AG04450 (cell line): ENCODE measurements at regions of chr5 and their contacts with region 1.

Region 1: DNA sequence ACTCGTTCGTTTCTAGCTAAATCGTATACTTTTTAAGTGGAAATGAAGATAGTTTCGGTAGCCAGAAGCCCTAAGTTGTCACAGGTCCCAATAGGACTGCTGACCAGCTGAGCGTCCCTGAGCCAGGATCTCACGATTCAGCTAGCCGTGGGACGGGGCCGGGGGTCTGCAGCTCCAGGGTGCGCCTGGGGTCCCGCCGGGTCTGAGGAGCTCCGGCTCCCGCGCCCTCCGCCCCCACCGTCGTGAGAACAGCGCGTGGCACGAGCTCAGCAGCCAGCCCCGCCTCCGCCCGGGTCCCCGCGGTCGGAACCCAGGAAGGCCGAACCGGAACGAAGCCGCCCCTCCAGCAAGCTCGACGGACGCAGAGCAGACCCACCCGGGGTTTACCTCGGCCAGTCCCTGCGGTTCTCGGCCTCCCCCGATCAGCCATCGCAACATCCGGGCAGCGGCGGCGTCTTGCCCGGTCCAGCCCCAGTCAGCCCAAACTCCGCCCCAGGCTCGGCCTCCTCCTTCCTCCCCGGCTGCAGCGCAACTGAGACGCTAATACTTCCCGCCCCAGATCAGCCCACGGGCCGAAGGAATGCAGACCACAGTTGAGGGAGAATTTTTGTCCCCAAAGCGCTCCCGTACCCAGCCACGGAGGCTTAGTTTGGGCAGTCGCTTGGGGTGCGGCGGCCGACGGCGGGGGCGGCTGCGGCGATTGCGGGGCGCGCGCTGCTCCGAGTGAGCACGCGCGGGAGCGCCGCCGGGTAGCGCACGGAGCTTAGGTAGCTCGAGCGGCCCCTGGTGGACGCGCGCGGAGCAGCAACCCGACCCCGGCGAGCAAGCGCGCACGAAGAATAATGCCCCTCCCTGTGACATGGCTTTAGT is at the start of gene WDR41:
- DNase-seq: peak; percentile 94
- H3K4me3 ChIP-seq: peak within 1 kb of the TSS; percentile 84
- H3K27ac ChIP-seq: peak within 1 kb of the TSS; percentile 94
- H3K27me3 ChIP-seq: peaks cover 3% of the 10 kb centered on the region
- CTCF ChIP-seq: peak; percentile 82
- polyA plus RNA-seq, gene WDR41: 70.7 and 84.5 TPM in 2 replicates

Region 2: DNA sequence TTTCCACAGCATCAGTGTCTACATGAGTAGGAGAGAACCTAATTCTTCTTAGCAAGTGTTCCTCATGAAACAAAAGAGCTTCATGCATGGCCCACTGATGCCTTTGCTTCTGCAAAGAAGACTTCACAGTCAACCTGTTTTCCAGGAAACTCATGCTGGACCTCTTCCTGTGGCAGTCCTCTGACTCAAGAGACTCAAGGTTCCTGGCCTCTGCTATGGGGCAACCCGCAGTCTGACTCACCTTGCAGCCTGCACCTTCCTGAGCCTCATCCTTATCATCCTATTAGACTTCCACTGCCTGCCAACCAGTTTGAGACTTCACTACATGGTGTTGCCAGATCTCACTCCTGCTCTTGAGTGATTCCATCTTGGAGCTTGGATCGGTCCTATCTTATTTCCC is 479.4 kb before region 1 on chr5:
- CTCF ChIA-PET with region 1: no interaction called
- POLR2A ChIA-PET with region 1: no interaction called
- DNase-seq: no peak
- H3K4me3 ChIP-seq: no peak overlapping the region
- H3K27ac ChIP-seq: no peak overlapping the region
- H3K27me3 ChIP-seq: peaks cover 2% of the 10 kb centered on the region
- CTCF ChIP-seq: no peak

Region 3: GRCh38 chr5:77076961-77077823 is 414.8 kb before region 1 on chr5:
- CTCF ChIA-PET with region 1: interaction called, 25 read pairs
- POLR2A ChIA-PET with region 1: no interaction called
- DNase-seq: peak; percentile 11
- H3K4me3 ChIP-seq: peak overlapping the region; percentile 47
- H3K27ac ChIP-seq: no peak overlapping the region
- H3K27me3 ChIP-seq: no peaks in the 10 kb centered on the region
- CTCF ChIP-seq: peak; percentile 46

Region 4: DNA sequence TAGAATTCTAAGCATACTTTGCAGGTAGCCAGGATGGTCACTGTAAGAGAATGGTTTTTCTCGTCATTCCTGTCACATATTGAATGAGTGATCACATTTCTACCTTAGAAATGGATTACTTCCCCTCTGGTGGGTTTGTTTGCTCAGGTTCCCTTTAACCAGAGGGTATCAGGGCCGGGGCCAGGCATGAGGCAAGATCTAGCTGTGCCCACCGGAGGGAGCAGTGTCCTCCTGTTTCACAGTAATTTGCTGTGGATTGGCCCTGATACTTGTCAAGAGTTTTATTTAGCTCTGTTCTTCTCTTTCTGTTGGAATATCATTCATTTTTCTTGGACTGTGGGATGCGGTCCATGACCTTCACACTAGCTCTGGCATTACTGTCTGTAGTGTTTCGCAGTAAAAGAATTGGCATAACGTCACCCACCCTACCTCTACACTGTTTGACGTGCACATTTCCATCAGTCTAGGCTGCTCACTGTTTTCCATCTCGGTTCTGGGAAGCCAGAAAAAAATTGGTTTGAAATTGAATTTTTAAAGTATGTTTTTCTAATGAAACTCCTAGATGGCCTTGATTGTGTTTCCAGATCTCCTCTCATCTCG is 362.5 kb before region 1 on chr5:
- CTCF ChIA-PET with region 1: interaction called, 45 read pairs
- POLR2A ChIA-PET with region 1: interaction called, 3 read pairs
- DNase-seq: no peak
- H3K4me3 ChIP-seq: no peak overlapping the region
- H3K27ac ChIP-seq: no peak overlapping the region
- H3K27me3 ChIP-seq: peaks cover 23% of the 10 kb centered on the region
- CTCF ChIP-seq: peak; percentile 56

Region 5: DNA sequence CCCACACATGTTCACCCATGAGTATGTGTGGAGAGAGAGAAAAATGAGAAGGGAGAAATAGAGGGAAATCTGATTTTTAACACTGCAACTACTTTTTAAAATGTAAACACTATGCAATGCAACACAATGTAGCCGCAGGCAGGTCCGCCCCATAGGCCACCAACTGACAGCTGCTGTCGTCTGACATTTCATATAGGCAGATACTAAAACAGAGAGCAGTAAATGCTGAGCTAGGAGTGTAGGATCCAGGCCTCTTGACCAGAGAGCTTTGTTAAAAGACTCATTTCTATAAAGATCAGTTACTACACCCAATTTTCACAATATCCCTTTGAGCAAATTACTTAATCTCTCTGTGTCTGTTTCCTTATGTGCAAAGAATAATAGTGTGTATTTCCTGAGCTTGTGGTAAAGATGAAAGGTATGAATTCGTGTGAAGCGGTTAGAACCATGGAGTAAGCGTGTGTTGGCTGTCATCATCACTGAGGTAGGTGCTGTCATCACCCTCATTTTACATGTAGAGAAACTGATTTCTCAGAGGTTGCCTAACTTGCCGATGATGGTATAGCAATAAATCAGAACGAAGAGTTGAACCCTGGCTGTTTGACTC is 336.7 kb before region 1 on chr5:
- CTCF ChIA-PET with region 1: interaction called, 10 read pairs
- POLR2A ChIA-PET with region 1: no interaction called
- DNase-seq: no peak
- H3K4me3 ChIP-seq: no peak overlapping the region
- H3K27ac ChIP-seq: no peak overlapping the region
- H3K27me3 ChIP-seq: no peaks in the 10 kb centered on the region
- CTCF ChIP-seq: no peak

Region 6: DNA sequence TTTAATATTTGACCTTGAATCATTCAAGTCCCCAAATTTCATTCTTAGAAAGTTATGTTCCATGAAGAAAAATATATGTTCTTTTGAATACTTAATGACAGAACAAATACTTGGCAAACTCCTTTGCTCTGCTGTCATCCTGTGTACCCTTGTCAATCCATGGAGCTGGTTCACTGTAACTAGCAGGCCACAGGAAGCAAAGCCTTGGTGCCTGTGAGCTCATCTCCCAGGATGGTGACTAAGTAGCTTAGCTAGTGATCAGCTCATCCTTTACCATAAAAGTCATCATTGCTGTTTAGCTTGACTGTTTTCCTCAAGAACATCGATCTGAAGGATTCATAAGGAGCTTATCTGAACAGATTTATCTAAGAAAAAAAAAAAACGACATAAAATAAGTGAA is 65.3 kb before region 1 on chr5:
- CTCF ChIA-PET with region 1: interaction called, 10 read pairs
- POLR2A ChIA-PET with region 1: interaction called, 3 read pairs
- DNase-seq: peak; percentile 23
- H3K4me3 ChIP-seq: no peak overlapping the region
- H3K27ac ChIP-seq: no peak overlapping the region
- H3K27me3 ChIP-seq: no peaks in the 10 kb centered on the region
- CTCF ChIP-seq: no peak

Region 7: DNA sequence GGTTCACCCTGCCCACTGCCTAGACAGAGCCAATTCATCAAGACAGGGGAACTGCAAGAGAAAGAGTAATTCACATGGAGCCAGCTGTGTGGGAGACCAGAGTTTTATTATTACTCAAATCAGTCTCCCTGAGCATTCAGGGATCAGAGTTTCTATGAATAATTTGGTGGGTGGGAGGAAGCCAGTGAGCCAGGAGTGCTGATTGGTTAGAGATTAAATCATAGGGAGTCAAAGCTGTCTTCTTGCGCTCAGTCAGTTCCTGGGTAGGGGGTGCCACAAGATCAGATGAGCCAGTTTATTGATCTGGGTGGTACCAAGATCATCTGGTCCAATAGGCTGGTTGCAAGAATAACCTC is 259.6 kb after region 1 on chr5:
- CTCF ChIA-PET with region 1: no interaction called
- POLR2A ChIA-PET with region 1: no interaction called
- DNase-seq: no peak
- H3K4me3 ChIP-seq: no peak overlapping the region
- H3K27ac ChIP-seq: no peak overlapping the region
- H3K27me3 ChIP-seq: no peaks in the 10 kb centered on the region
- CTCF ChIP-seq: no peak